ENCODE measurements at regions of chr7 and their contacts with region 1.

Region 1: DNA sequence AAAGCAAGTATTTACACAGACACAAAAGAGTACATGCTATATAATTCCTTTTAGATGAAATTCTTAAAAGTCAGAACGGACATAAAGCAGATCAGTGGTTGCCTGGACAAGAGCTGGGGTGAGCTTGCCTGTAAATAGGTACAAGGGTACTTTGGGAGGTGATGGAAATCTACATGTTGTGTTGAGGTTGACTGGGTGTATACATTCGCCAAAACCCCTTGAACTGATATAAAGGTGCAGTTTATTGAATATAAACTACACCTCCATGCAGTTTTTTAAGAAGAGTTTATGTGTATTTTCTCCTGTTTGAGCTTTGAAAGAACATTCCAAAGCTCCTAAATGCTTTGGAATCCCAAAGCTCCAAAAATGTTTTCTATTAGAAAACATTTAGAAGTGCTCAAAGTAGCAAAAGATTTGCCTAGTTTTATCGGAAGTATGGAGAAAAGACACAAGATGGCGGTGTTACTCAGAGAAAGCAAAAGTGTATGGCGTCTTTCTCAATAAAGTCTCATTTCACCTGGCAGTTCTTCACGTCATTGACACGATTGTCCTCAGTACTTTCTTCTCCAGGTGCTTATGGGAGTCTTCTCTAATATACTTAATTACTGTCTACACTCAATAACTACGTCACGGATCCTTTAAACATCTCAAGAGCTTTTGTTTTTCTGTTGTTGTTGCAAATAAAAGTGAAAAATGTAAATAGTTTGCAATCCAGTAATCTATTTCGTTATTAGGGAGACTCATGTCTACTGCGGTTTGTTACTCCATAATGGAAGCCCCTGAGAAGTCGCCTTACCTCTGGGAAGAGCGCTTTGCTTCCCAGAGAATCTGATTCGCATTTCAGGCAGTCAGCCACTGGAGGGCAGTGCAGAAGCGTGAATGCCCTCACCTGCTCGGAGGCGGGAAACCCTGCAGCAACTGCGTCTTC is 14.7 kb upstream of the SEC61G start:
- DNase-seq: peak; percentile 87
- H3K4me3 ChIP-seq: peak overlapping the region; percentile 41
- H3K27ac ChIP-seq: no peak overlapping the region
- H3K4me1 ChIP-seq: no peaks in the 10 kb centered on the region
- H3K27me3 ChIP-seq: peaks cover 6% of the 10 kb centered on the region
- CTCF ChIP-seq: peak; percentile 82

Region 2: GRCh38 chr7:54591404-54592386 is 182.0 kb before region 1 on chr7:
- CTCF ChIA-PET with region 1: no interaction called
- POLR2A ChIA-PET with region 1: no interaction called
- intact Hi-C with region 1: no loop called
- DNase-seq: no peak
- H3K4me3 ChIP-seq: no peak overlapping the region
- H3K27ac ChIP-seq: no peak overlapping the region
- H3K4me1 ChIP-seq: no peaks in the 10 kb centered on the region
- H3K27me3 ChIP-seq: no peaks in the 10 kb centered on the region
- CTCF ChIP-seq: no peak

Region 3: GRCh38 chr7:54758702-54759592 is 14.8 kb before region 1 on chr7 and contains the start of gene SEC61G:
- CTCF ChIA-PET with region 1: interaction called, 3 read pairs
- POLR2A ChIA-PET with region 1: interaction called, 12 read pairs
- intact Hi-C with region 1: no loop called
- DNase-seq: peak; percentile 97
- H3K4me3 ChIP-seq: peak within 1 kb of the TSS; percentile 96
- H3K27ac ChIP-seq: peak within 1 kb of the TSS; percentile 69
- H3K4me1 ChIP-seq: peaks cover 11% of the 10 kb centered on the region
- H3K27me3 ChIP-seq: no peaks in the 10 kb centered on the region
- CTCF ChIP-seq: no peak
- total RNA-seq, gene SEC61G: 129 and 136 TPM in 2 replicates

Region 4: GRCh38 chr7:55255496-55256435 is 482.0 kb after region 1 on chr7:
- CTCF ChIA-PET with region 1: interaction called, 12 read pairs
- POLR2A ChIA-PET with region 1: no interaction called
- intact Hi-C with region 1: loop called (anchors 1 kb)
- DNase-seq: peak; percentile 89
- H3K4me3 ChIP-seq: peak overlapping the region; percentile 41
- H3K27ac ChIP-seq: no peak overlapping the region
- H3K4me1 ChIP-seq: peaks cover 6% of the 10 kb centered on the region
- H3K27me3 ChIP-seq: peaks cover 24% of the 10 kb centered on the region
- CTCF ChIP-seq: peak; percentile 95

Region 5: DNA sequence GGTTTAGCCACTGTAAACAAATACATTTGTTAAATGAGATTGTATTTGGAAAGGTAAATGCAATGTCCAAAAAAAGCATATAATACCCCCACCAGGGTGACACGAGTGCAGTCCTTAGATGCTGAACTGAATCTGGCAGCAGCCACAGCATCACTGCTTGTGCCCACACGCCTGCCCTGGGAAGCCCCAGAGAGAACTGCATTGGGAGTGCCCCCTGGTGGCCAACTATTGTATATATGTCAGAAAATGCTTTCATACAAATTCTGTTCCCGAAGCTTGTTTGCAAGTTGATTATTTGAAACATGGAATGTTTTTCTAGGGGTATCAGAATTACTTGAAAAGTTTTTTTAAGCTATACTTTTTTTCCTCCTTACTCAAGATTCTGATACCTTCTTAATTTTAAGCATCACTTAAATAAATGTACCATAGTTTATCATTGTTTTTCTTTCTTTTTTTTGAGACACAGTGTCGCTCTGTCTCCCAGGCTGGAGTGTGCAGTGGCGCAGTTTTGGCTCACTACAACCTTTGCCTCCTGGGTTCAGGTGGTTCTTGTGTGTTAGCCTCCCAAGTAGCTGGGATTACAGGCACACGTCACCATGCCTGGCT is 641.5 kb after region 1 on chr7:
- CTCF ChIA-PET with region 1: no interaction called
- POLR2A ChIA-PET with region 1: no interaction called
- intact Hi-C with region 1: loop called (anchors 1 kb)
- DNase-seq: peak; percentile 84
- H3K4me3 ChIP-seq: no peak overlapping the region
- H3K27ac ChIP-seq: no peak overlapping the region
- H3K4me1 ChIP-seq: no peaks in the 10 kb centered on the region
- H3K27me3 ChIP-seq: no peaks in the 10 kb centered on the region
- CTCF ChIP-seq: peak; percentile 80